ENCODE measurements at regions of chr6 and their contacts with region 1.

Region 1: GRCh38 chr6:34656378-34657036 is 40.1 kb downstream of the ILRUN start:
- DNase-seq: peak; percentile 95
- H3K4me3 ChIP-seq: peak overlapping the region; percentile 62
- H3K27ac ChIP-seq: peak overlapping the region; percentile 98
- H3K4me1 ChIP-seq: peaks cover 98% of the 10 kb centered on the region
- CTCF ChIP-seq: no peak

Region 2: DNA sequence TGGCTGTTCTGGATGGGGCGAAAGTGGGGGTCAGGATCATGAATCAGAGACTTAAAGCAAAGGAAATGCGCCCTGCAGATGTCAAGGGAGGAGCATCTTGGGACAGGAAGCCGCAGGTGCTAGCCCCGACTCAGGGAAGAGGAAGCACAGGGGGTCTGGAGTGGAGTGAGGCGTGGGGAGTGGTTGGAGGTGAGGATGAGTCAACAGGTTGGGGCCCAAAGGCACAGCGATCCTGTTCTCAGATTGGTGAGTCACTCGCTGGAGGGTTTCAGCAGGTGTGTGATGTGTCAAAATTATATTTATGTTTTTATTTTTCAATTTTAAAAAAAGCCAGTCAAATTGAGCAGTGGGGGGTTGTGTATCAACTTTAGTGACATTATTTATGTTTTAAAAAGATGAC is 171.6 kb before region 1 on chr6:
- CTCF ChIA-PET with region 1: no interaction called
- POLR2A ChIA-PET with region 1: no interaction called
- intact Hi-C with region 1: no loop called
- DNase-seq: peak; percentile 91
- H3K4me3 ChIP-seq: peak overlapping the region; percentile 70
- H3K27ac ChIP-seq: peak overlapping the region; percentile 98
- H3K4me1 ChIP-seq: peaks cover 87% of the 10 kb centered on the region
- CTCF ChIP-seq: no peak

Region 3: GRCh38 chr6:34638834-34639736 is 17.4 kb before region 1 on chr6:
- CTCF ChIA-PET with region 1: no interaction called
- POLR2A ChIA-PET with region 1: interaction called, 10 read pairs
- intact Hi-C with region 1: no loop called
- DNase-seq: peak; percentile 32
- H3K4me3 ChIP-seq: no peak overlapping the region
- H3K27ac ChIP-seq: peak overlapping the region; percentile 27
- H3K4me1 ChIP-seq: peaks cover 30% of the 10 kb centered on the region
- CTCF ChIP-seq: no peak

Region 4: DNA sequence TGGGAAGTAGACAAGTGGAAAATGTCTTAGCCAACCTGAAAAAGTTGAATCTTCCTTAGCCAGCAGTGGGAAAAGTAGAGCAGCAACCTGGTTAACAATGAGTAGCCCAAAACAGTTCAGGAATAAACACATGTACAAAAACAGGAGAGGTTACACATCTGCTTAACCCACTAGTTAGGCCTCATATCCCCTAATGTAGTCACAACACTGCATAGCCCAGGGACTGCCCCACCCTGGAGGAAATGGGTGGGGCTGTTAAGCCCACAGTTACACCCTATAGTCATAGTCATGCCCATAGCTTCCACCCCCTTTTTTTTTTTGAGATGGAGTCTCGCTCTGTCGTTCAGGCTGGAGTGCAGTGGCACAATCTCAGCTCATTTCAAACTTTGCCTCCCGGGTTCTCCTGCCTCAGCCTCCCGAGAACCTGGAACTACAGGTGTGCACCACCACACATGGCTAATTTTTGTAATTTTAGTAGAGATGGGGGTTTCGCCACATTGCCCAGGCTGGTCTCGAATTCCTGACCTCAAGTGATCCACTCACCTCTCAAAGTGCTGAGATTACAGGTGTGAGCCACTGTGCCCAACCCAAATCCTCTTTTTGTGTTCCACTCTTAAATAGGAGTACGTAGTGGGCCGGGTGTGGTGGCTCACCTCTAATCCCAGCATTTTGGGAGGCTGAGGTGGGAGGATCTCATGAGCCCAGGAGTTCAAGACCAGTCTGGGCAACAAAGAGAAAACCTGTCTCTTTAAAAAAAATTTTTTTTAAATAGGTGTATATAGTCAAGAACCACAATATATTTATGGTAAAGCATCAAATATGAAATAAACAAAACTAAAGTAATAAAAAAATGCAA is 15.5 kb after region 1 on chr6:
- CTCF ChIA-PET with region 1: interaction called, 5 read pairs
- POLR2A ChIA-PET with region 1: interaction called, 139 read pairs
- intact Hi-C with region 1: loop called (anchors 1 kb)
- DNase-seq: peak; percentile 74
- H3K4me3 ChIP-seq: peak overlapping the region; percentile 54
- H3K27ac ChIP-seq: peak overlapping the region; percentile 99
- H3K4me1 ChIP-seq: peaks cover 85% of the 10 kb centered on the region
- CTCF ChIP-seq: no peak

Region 5: DNA sequence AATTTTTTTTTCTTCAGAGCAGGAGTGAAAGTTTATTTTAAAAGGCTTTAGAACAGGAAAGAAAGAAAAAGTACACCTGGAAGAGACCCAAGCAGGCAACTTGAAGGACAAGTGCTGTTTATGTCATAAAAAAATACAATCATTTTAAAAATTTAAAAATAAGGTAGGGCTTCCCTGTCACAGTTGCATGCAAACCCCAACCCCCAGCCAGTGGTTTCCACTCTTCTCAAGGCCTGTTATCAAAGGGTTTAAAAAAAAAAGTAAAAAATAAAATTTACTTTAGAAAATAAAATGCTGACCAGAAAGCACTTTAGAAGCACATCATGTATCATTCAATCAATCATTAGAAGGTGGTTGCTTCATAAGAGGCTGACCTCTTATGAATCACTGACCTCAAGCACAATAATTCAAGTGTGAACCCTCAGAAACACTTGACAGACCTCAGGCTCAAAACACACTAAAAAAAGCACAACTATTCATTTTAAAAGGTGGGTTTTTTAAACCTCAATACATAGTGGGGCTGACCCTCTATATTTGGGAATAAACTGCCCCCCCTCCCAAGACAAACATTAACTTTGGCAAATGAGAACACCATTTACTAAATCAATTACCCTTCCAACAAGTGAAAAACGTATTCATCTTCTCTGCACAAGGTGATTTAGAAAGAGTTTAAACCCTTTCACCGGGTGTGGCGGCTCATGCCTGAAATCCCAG is 24.5 kb after region 1 on chr6:
- CTCF ChIA-PET with region 1: no interaction called
- POLR2A ChIA-PET with region 1: interaction called, 139 read pairs
- intact Hi-C with region 1: no loop called
- DNase-seq: no peak
- H3K4me3 ChIP-seq: peak overlapping the region; percentile 46
- H3K27ac ChIP-seq: peak overlapping the region; percentile 89
- H3K4me1 ChIP-seq: peaks cover 86% of the 10 kb centered on the region
- CTCF ChIP-seq: no peak

Region 6: DNA sequence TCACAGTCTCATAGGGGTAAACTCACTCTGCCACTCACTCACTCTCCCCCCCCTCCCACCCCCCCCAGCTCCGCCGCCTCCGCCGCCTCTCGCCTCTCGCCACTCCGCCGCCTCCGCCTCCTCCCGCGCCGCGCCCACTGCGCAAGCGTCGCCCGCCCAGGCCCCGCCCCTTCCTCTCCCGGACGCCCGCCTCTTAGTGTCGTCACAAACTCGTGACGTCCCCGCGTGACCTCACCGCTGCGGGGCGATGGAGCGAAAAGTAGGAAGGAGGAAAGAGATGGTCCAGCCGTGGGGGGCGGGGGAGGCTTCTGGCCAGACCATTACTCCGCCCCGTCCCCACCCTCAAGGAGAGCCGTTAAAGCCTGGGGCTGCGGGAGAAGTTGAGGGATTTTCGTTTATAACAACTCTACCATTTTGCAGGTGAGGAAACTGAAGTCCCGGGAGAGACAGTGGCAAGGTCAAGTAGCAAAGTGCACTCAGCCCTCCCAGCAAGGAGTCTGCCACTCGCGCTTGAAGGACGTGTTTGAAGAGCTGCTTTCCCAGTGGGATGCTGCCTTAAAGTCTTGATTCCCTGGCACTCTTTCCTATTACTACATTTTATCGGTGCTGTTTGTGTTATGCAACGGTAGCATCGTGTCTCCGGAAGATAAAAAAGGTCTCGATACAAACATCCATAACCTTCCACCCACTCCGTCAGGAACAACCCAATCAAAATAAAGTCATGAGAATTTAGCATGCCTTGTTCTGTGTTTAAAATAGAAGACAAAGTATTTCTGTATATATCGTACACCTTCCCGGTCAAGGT is 40.4 kb after region 1 on chr6 and contains the start of gene ILRUN:
- CTCF ChIA-PET with region 1: no interaction called
- POLR2A ChIA-PET with region 1: interaction called, 12 read pairs
- intact Hi-C with region 1: loop called (anchors 2 kb)
- DNase-seq: peak; percentile 95
- H3K4me3 ChIP-seq: peak within 1 kb of the TSS; percentile 97
- H3K27ac ChIP-seq: peak within 1 kb of the TSS; percentile 65
- H3K4me1 ChIP-seq: peaks cover 44% of the 10 kb centered on the region
- CTCF ChIP-seq: no peak
- total RNA-seq, gene ILRUN: 25.6 and 27.1 TPM in 2 replicates

Region 7: DNA sequence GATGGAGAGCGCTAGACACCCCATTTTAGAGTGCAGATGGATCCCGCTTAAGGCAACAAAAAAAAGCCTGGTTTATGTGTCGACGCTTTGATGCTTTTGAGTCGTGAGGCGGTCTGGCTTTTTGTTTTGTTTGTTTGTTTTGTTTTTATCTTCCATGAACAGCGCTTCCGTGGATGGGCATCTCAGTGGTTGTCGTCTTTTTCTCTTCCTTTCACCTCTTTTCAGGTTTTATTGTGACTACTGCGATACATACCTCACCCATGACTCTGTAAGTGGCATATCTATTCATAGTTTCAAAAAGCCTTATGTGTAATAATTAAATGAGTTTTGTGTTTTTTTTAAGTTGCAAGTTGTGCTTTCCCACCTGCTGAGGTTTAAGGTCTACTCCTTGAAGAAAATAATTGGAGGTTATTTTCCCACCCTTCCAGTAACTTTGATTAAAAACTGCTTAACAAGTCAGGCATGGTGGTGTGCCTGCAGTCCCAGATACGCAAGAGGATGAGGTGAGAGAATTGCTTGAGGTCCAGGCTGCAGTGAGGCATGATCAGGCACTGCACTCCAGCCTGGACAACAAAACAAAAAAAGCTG is 101.3 kb after region 1 on chr6:
- CTCF ChIA-PET with region 1: no interaction called
- POLR2A ChIA-PET with region 1: interaction called, 3 read pairs
- intact Hi-C with region 1: loop called (anchors 5 kb)
- DNase-seq: no peak
- H3K4me3 ChIP-seq: peak overlapping the region; percentile 82
- H3K27ac ChIP-seq: peak overlapping the region; percentile 79
- H3K4me1 ChIP-seq: peaks cover 28% of the 10 kb centered on the region
- CTCF ChIP-seq: no peak